Activated CD4-positive, alpha-beta T cell treated with anti-CD3 and anti-CD28 coated beads for 36 hours (primary cell): ENCODE measurements at regions of chr6 and their contacts with region 1.

Region 1: GRCh38 chr6:155418017-155418761 is 37.5 kb downstream of the NOX3 start:
- DNase-seq: peak; percentile 86
- ATAC-seq: peak; percentile 83
- H3K4me3 Mint-ChIP-seq: peak overlapping the region; percentile 65
- H3K27ac Mint-ChIP-seq: peak overlapping the region; percentile 98
- H3K4me1 Mint-ChIP-seq: peaks cover 48% of the 10 kb centered on the region
- H3K27me3 Mint-ChIP-seq: no peaks in the 10 kb centered on the region

Region 2: DNA sequence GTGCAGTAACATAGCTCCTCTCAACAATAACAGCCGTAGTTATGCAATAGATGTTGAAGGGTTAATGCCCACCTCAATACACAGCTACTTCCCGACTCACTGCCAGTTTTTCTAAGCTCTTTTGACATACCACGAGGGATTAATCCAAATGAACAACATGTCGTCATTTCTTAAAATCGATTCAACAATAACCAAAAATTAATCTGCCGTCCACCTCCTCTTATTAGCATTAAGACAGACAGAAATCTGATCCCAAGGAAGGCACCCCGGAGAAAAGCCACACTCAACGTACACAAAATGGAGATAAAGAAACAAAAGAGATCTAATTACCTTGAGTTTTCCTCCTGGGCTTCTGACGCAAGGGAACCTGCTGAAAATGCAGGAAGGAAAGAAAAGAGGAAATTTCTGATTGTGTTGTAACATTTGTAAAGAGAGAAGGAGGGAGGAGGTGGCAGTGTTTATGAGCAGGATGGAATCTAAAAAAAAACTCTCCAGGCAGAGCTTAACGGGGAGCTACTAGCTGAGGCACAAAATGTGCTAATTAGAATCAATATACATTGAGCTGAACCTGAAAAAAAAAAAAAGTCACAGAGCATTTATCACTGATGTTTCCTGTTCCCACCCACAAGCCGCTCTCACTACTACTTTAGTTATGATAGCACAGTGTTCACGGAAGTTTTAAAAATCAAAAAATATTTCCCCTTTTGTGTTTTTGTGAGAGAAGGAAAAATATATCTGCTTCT is 1170.9 kb before region 1 on chr6:
- CTCF ChIA-PET with region 1: no interaction called
- POLR2A ChIA-PET with region 1: no interaction called
- intact Hi-C with region 1: loop called in 1 of 2 experiments (anchors 10 kb)
- DNase-seq: peak; percentile 62
- ATAC-seq: peak; percentile 57
- H3K4me3 Mint-ChIP-seq: peak overlapping the region; percentile 79
- H3K27ac Mint-ChIP-seq: peak overlapping the region; percentile 89
- H3K4me1 Mint-ChIP-seq: peaks cover 80% of the 10 kb centered on the region
- H3K27me3 Mint-ChIP-seq: peaks cover 6% of the 10 kb centered on the region

Region 3: DNA sequence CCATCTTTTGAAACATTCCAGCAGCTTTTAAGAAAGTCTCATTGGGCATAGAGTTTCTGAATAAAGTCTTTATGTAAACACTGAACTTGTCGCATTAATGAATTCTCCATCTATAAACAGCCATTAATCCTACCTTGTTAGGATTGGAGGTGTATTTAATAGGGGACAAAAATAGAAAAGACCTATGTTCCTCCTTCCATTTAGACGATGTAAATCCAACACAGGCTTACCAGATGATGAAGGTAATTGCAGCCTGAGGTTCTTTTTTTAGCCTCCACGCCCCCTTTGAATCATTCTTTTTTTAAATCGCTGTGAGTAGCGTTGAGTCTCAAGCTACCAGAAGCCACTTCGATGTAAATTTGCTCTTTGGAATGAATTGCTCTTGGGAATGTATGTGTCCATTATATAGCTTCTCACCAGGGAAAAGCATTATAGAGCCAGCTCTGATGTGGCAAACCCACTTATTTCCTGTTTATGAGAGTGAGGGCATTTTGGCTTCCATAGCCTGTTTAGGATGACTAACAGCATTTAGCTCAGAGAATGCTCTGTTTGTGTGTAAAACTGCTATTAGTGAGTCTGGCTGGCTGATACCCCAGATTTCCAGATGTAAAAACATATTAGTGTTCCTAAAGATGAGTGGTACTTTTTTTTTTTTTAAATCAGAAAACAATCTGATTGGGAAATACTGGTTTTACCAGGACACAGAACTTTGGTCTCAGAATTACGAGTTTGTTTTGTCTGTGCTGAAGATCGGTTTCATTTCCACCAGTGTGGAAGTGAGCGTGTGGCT is 229.3 kb before region 1 on chr6:
- CTCF ChIA-PET with region 1: no interaction called
- POLR2A ChIA-PET with region 1: no interaction called
- intact Hi-C with region 1: loop called in 1 of 2 experiments (anchors 1 kb)
- DNase-seq: no peak
- ATAC-seq: peak; percentile 16
- H3K4me3 Mint-ChIP-seq: no peak overlapping the region
- H3K27ac Mint-ChIP-seq: peak overlapping the region; percentile 55
- H3K4me1 Mint-ChIP-seq: peaks cover 48% of the 10 kb centered on the region
- H3K27me3 Mint-ChIP-seq: no peaks in the 10 kb centered on the region

Region 4: DNA sequence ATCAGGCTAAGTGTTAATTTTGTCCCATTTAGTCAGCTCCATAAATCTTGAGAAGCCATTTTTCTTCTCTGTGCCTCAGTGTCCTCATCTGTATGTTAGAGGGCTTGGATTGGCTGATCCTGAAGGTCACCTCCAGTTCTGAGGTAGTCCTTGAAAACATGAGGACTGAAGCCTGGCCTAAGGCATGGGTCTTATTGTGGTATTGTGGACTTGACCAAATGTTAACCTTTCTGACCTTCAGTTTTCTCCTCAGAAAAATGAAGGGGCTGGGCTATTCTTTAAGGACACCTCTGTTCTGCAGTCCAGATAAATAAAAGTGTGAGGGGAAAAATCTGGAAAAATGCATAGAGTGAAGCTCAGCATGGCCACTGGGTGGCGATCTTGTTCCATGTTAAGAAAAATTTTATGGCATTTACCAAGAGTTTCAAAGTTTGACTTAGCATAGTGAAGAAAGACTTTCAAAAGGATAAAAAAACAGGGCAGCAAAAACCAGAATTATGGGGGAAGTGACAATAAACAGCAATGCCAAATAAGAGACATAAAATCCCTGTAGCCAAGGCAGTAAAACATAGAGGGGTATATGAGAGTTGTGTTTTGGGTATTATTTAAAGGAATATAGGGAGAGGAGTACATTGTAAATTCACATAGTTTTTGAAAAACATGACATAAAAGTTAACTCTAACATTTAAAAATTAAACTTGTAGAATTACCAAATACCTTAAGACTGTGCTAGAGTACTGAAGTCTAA is 90.7 kb before region 1 on chr6:
- CTCF ChIA-PET with region 1: no interaction called
- POLR2A ChIA-PET with region 1: no interaction called
- intact Hi-C with region 1: loop called (anchors 2 kb)
- DNase-seq: peak; percentile 82
- ATAC-seq: peak; percentile 63
- H3K4me3 Mint-ChIP-seq: no peak overlapping the region
- H3K27ac Mint-ChIP-seq: peak overlapping the region; percentile 86
- H3K4me1 Mint-ChIP-seq: peaks cover 27% of the 10 kb centered on the region
- H3K27me3 Mint-ChIP-seq: no peaks in the 10 kb centered on the region

Region 5: DNA sequence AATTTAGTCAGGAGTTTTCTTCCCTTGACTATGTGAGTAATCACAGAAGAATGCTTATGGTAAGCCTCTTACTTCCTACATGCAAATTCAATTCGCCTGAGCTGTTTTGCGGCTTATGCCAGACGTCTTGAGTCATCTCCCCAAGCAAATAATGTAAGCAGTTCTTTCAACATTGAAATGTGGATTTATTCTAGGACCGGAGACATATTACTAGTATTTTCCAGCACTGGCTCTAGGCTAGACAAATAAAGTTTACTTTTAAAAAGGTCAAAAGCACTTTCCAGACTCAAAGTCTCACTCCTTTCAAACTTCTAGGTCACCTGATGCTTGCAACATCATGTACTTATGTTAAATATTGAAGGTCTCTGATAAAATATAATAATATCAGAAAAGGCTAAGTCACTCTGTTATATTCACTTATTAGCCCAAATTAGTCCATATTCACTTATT is 75.5 kb after region 1 on chr6:
- CTCF ChIA-PET with region 1: no interaction called
- POLR2A ChIA-PET with region 1: no interaction called
- intact Hi-C with region 1: loop called in 1 of 2 experiments (anchors 2 kb)
- DNase-seq: peak; percentile 52
- ATAC-seq: peak; percentile 85
- H3K4me3 Mint-ChIP-seq: no peak overlapping the region
- H3K27ac Mint-ChIP-seq: no peak overlapping the region
- H3K4me1 Mint-ChIP-seq: peaks cover 22% of the 10 kb centered on the region
- H3K27me3 Mint-ChIP-seq: no peaks in the 10 kb centered on the region

Region 6: DNA sequence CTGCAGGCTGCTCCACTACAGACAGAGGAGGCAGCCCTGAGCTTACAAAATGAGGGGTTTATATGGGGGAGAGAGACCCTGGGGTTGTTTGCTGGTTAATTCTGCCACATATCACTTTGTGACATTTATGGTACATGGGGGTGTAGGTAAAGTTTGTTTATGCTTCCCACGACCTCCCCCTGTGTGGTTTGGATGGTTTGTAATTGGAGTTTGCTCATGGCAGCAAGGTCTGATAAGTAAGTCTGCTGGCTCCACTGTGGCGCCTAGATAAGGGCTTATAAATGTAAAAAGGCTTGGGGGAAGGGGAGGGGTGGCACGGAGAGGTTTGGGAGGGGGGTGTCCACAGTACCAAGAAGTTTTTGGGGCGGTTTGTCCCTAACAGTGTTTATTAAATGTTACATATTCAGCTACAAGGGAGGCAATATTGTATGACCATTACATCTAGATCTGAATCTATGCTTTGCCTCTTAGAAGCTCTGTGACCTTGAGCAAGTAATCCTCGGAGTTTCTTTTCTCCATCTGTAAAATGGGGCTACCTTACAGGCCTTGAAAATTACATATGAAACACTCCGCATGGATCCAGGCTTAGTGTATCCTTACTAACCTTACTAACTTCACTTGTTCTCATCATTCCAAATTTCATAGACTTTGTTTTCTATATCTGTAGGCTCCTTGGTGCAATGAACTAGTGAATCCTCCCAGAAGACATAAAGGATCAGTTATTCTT is 242.2 kb after region 1 on chr6:
- CTCF ChIA-PET with region 1: no interaction called
- POLR2A ChIA-PET with region 1: no interaction called
- intact Hi-C with region 1: no loop called
- DNase-seq: no peak
- ATAC-seq: no peak
- H3K4me3 Mint-ChIP-seq: no peak overlapping the region
- H3K27ac Mint-ChIP-seq: no peak overlapping the region
- H3K4me1 Mint-ChIP-seq: no peaks in the 10 kb centered on the region
- H3K27me3 Mint-ChIP-seq: peaks cover 20% of the 10 kb centered on the region

Region 7: GRCh38 chr6:156174031-156174890 is 756.1 kb after region 1 on chr6:
- CTCF ChIA-PET with region 1: no interaction called
- POLR2A ChIA-PET with region 1: no interaction called
- intact Hi-C with region 1: loop called in 1 of 2 experiments (anchors 1 kb)
- DNase-seq: peak; percentile 73
- ATAC-seq: peak; percentile 95
- H3K4me3 Mint-ChIP-seq: peak overlapping the region; percentile 9
- H3K27ac Mint-ChIP-seq: peak overlapping the region; percentile 88
- H3K4me1 Mint-ChIP-seq: peaks cover 27% of the 10 kb centered on the region
- H3K27me3 Mint-ChIP-seq: no peaks in the 10 kb centered on the region